Activated T-helper 1 cell treated with anti-CD3 and anti-CD28 coated beads, Interleukin-12 subunit alpha, Interleukin-12 subunit beta, Interleukin-2, Interleukin-4 antibody, amounts not matched to agents 30 ng/mL and 10 ng/mL and 1 ng/mL, durations not matched to agents 14 hours and 24 hours and 36 hours (primary cell): ENCODE measurements at regions of chr18 and their contacts with region 1.

Region 1: GRCh38 chr18:54284981-54285785 is 15.9 kb downstream of the POLI start:
- DNase-seq: peak; percentile 59
- H3K4me3 Mint-ChIP-seq: peak overlapping the region; percentile 32
- H3K27ac Mint-ChIP-seq: peak overlapping the region; percentile 73
- H3K4me1 Mint-ChIP-seq: peaks cover 39% of the 10 kb centered on the region
- H3K27me3 Mint-ChIP-seq: no peaks in the 10 kb centered on the region

Region 2: GRCh38 chr18:54173980-54174630 is 111.1 kb before region 1 on chr18:
- intact Hi-C with region 1: loop called (anchors 1 kb)
- DNase-seq: no peak
- H3K4me3 Mint-ChIP-seq: peak overlapping the region; percentile 49
- H3K27ac Mint-ChIP-seq: peak overlapping the region; percentile 96
- H3K4me1 Mint-ChIP-seq: peaks cover 69% of the 10 kb centered on the region
- H3K27me3 Mint-ChIP-seq: no peaks in the 10 kb centered on the region

Region 3: GRCh38 chr18:54209471-54210180 is 75.6 kb before region 1 on chr18:
- intact Hi-C with region 1: loop called (anchors 1 kb)
- DNase-seq: no peak
- H3K4me3 Mint-ChIP-seq: peak overlapping the region; percentile 5
- H3K27ac Mint-ChIP-seq: peak overlapping the region; percentile 85
- H3K4me1 Mint-ChIP-seq: peaks cover 70% of the 10 kb centered on the region
- H3K27me3 Mint-ChIP-seq: no peaks in the 10 kb centered on the region

Region 4: GRCh38 chr18:54261894-54262293 is 23.3 kb before region 1 on chr18:
- intact Hi-C with region 1: loop called (anchors 1 kb)
- DNase-seq: no peak
- H3K4me3 Mint-ChIP-seq: peak overlapping the region; percentile 77
- H3K27ac Mint-ChIP-seq: peak overlapping the region; percentile 94
- H3K4me1 Mint-ChIP-seq: peaks cover 66% of the 10 kb centered on the region
- H3K27me3 Mint-ChIP-seq: no peaks in the 10 kb centered on the region

Region 5: GRCh38 chr18:54351186-54351585 is 66.0 kb after region 1 on chr18:
- intact Hi-C with region 1: loop called (anchors 1 kb)
- DNase-seq: no peak
- H3K4me3 Mint-ChIP-seq: no peak overlapping the region
- H3K27ac Mint-ChIP-seq: no peak overlapping the region
- H3K4me1 Mint-ChIP-seq: peaks cover 4% of the 10 kb centered on the region
- H3K27me3 Mint-ChIP-seq: peaks cover 32% of the 10 kb centered on the region

Region 6: GRCh38 chr18:54392543-54393023 is 107.4 kb after region 1 on chr18:
- intact Hi-C with region 1: loop called (anchors 2 kb)
- DNase-seq: no peak
- H3K4me3 Mint-ChIP-seq: no peak overlapping the region
- H3K27ac Mint-ChIP-seq: no peak overlapping the region
- H3K4me1 Mint-ChIP-seq: peaks cover 43% of the 10 kb centered on the region
- H3K27me3 Mint-ChIP-seq: peaks cover 3% of the 10 kb centered on the region

Region 7: GRCh38 chr18:54794823-54795222 is 509.6 kb after region 1 on chr18:
- intact Hi-C with region 1: no loop called
- DNase-seq: no peak
- H3K4me3 Mint-ChIP-seq: no peak overlapping the region
- H3K27ac Mint-ChIP-seq: no peak overlapping the region
- H3K4me1 Mint-ChIP-seq: no peaks in the 10 kb centered on the region
- H3K27me3 Mint-ChIP-seq: peaks cover 7% of the 10 kb centered on the region